Common myeloid progenitor, CD34-positive (primary cell): ENCODE measurements at regions of chr7 and their contacts with region 1.

Region 1: DNA sequence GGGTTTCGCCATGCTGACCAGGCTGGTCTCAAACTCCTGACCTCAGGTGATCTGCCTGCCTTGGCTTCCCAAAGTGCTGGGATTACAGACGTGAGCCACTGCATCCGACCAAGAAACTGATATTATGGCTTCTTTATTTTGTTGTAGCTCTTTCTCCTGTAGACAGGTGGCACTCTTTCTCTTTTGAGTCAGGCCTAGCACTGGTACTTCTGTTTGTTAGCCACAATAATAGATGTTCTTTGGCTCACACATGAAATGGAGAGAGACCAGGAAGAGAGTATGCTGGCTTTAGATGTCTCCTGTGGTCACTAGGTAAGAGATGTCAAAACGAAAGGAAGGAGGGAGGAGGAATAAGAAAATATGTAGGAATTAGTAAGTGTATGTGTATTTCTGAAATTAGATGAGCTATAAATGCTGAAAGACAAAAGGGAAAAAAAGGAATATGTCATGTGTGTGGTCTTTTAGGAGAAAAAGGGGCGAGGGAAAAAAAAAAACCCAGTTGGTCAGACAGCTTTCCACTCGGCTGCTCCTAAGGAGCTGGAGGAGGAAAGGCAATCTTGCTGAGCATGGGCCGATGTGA is 78.7 kb downstream of the CLEC2L start:
- DNase-seq: peak; percentile 31 to 68 (median 68)
- H3K4me3 ChIP-seq: no peak overlapping the region
- H3K27ac ChIP-seq: no peak overlapping the region
- H3K4me1 ChIP-seq: peaks cover 0 to 11% (median 7%) of the 10 kb centered on the region in 4 experiments
- H3K27me3 ChIP-seq: no peaks in the 10 kb centered on the region

Region 2: GRCh38 chr7:139588632-139589031 is 13.6 kb before region 1 on chr7:
- CTCF ChIA-PET with region 1: interaction called, 24 read pairs
- POLR2A ChIA-PET with region 1: no interaction called
- DNase-seq: peak in 2 of 3 donors; percentile 21 to 33
- H3K4me3 ChIP-seq: no peak overlapping the region
- H3K27ac ChIP-seq: no peak overlapping the region
- H3K4me1 ChIP-seq: peaks cover 0 to 39% (median 4%) of the 10 kb centered on the region in 4 experiments
- H3K27me3 ChIP-seq: no peaks in the 10 kb centered on the region

Region 3: GRCh38 chr7:139613971-139614411 is 11.8 kb after region 1 on chr7:
- CTCF ChIA-PET with region 1: interaction called, 19 read pairs
- POLR2A ChIA-PET with region 1: no interaction called
- DNase-seq: no peak
- H3K4me3 ChIP-seq: no peak overlapping the region
- H3K27ac ChIP-seq: no peak overlapping the region
- H3K4me1 ChIP-seq: no peaks in the 10 kb centered on the region
- H3K27me3 ChIP-seq: no peaks in the 10 kb centered on the region

Region 4: DNA sequence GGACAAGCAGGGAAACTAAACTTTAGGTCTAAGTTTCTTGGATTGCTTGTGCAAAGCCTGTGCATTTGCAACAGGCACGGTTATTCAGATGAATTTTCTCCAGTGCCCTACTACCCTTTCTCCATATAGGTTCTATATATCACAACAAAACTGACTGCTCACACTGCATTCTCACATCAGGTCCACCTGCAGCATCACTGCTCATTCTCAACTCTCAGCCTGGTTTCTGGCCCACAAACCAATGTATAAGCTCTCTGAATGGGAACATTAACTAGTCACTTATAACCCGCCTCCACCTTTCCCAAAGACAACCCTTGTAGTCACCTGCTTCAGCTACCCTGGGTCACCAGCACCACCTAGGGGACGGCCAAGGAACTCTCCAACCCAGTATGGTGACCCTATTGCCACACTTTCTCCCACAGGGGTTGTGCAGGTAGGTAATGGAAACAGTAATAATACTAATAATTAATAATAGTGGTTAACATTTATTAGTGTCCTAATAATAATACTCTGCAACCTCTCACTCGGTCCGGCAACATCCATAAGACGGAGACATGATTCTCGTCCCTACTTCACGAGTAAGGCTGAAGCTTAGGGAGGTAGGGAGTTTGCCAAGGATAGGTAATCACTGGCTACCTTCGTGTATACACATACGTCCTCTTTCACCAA is 18.6 kb after region 1 on chr7:
- CTCF ChIA-PET with region 1: interaction called, 19 read pairs
- POLR2A ChIA-PET with region 1: no interaction called
- DNase-seq: peak in 2 of 3 donors; percentile 53 to 56
- H3K4me3 ChIP-seq: no peak overlapping the region
- H3K27ac ChIP-seq: no peak overlapping the region
- H3K4me1 ChIP-seq: peaks cover 2 to 25% (median 13%) of the 10 kb centered on the region in 4 experiments
- H3K27me3 ChIP-seq: no peaks in the 10 kb centered on the region

Region 5: DNA sequence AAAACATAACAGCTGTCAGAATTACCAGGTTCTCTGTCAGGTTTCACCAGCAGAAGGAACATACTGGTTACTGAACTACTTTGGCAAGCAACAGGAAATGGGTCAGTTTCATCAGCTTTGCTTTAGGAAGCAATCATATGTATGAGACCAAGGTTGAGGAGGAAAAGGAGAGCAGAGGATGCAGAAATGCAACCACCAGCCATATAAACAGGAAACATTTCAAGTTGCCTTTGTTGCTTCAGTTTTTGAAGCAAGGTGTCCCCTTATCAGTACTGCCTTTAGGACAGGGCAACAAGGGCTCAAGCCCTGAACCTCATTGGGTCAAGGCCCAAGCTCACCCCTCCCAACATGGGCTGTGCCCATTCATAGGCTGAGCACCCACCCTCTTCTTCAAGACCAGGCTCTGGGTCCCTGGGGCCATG is 165.3 kb after region 1 on chr7:
- CTCF ChIA-PET with region 1: no interaction called
- POLR2A ChIA-PET with region 1: no interaction called
- DNase-seq: peak in 2 of 3 donors; percentile 49 to 55
- H3K4me3 ChIP-seq: no peak overlapping the region
- H3K27ac ChIP-seq: no peak overlapping the region
- H3K4me1 ChIP-seq: peaks cover 3 to 29% (median 21%) of the 10 kb centered on the region in 4 experiments
- H3K27me3 ChIP-seq: no peaks in the 10 kb centered on the region